MCF 10A (cell line): ENCODE measurements at regions of chr6 and their contacts with region 1.

Region 1: DNA sequence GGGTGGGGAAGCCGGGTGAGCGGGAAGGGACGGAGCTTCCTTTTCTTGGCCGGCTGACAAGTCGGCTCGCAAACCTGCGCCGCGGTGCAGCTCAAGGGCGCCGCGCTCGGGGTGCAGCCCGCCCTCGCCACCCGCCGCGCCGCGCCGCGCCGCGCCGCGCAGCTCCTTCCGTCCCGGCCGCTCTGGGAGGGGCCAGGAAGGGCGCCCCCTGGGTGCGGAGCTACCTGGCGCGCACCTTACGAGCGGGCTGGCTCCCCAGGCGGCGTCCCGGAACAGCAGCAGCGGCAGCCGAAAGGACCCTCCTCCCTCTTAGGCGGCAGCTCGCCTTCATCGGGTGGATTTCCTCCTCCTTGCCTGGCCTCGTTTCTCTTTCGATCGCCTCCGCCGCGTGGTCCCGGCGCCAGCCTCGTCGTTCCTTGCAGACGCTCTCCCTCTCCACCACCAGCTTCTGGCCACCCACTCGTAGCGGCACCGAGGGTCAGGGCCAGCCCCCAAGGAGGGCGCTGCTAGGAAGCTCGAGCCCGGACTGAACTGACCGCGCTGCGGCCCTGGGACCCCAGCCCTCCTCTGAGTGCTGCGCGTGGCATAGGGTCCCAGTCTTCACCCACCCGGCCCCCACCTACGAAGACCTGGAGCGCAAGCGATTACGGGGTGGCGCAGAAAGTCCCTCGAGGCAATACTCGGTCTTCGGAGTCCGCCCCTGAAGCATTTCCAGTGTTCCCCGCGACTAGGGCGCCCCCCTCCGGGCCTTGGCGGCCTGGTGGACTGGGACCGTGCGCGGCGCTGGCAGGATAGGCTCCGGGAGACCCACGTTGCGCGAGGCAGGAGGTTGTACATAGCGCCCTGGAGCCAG is at the start of gene MAP3K5:
- DNase-seq: peak; percentile 93
- H3K4me3 Mint-ChIP-seq: peak within 1 kb of the TSS; percentile 92
- H3K27ac Mint-ChIP-seq: peak within 1 kb of the TSS; percentile 98
- H3K4me1 Mint-ChIP-seq: peaks cover 17% of the 10 kb centered on the region
- H3K27me3 Mint-ChIP-seq: no peaks in the 10 kb centered on the region
- CTCF ChIP-seq: peak; percentile 65
- total RNA-seq, gene MAP3K5: 7.6 and 8.4 TPM in 2 replicates

Region 2: GRCh38 chr6:136383268-136383937 is 409.2 kb before region 1 on chr6:
- CTCF ChIA-PET with region 1: no interaction called
- POLR2A ChIA-PET with region 1: no interaction called
- intact Hi-C with region 1: no loop called
- DNase-seq: no peak
- H3K4me3 Mint-ChIP-seq: no peak overlapping the region
- H3K27ac Mint-ChIP-seq: no peak overlapping the region
- H3K4me1 Mint-ChIP-seq: no peaks in the 10 kb centered on the region
- H3K27me3 Mint-ChIP-seq: no peaks in the 10 kb centered on the region
- CTCF ChIP-seq: no peak

Region 3: GRCh38 chr6:136550330-136551071 is 242.1 kb before region 1 on chr6 and contains the start of gene MAP7:
- CTCF ChIA-PET with region 1: interaction called, 3 read pairs
- POLR2A ChIA-PET with region 1: interaction called, 9 read pairs
- intact Hi-C with region 1: loop called (anchors 1 kb)
- DNase-seq: peak; percentile 86
- H3K4me3 Mint-ChIP-seq: peak within 1 kb of the TSS; percentile 72
- H3K27ac Mint-ChIP-seq: peak within 1 kb of the TSS; percentile 57
- H3K4me1 Mint-ChIP-seq: peaks cover 8% of the 10 kb centered on the region
- H3K27me3 Mint-ChIP-seq: no peaks in the 10 kb centered on the region
- CTCF ChIP-seq: peak; percentile 97
- total RNA-seq, gene MAP7: 15.4 and 17.2 TPM in 2 replicates

Region 4: GRCh38 chr6:136613477-136613876 is 179.2 kb before region 1 on chr6:
- CTCF ChIA-PET with region 1: interaction called, 7 read pairs
- POLR2A ChIA-PET with region 1: interaction called, 11 read pairs
- intact Hi-C with region 1: loop called (anchors 1 kb)
- DNase-seq: no peak
- H3K4me3 Mint-ChIP-seq: no peak overlapping the region
- H3K27ac Mint-ChIP-seq: no peak overlapping the region
- H3K4me1 Mint-ChIP-seq: peaks cover 21% of the 10 kb centered on the region
- H3K27me3 Mint-ChIP-seq: no peaks in the 10 kb centered on the region
- CTCF ChIP-seq: no peak

Region 5: DNA sequence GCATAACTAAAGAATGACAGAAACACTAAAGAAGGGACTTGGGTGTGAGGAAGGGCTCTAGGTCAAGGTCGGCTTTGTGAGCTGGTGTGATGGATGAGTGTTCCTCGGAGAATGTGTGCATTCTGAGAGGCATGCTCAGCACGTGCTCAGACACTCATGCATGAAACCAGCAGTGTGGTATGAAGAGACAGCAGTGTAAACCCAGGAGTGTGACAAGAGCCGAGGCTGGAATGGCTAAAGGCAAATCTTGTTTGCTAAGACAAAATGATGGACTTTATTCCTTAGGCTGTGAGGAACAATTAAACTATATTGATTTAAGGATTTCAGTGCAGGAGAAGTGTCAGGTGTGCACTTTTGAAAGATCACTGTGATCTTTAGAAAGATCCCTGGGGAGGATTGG is 135.0 kb before region 1 on chr6:
- CTCF ChIA-PET with region 1: interaction called, 14 read pairs
- POLR2A ChIA-PET with region 1: interaction called, 16 read pairs
- intact Hi-C with region 1: no loop called
- DNase-seq: no peak
- H3K4me3 Mint-ChIP-seq: no peak overlapping the region
- H3K27ac Mint-ChIP-seq: no peak overlapping the region
- H3K4me1 Mint-ChIP-seq: peaks cover 12% of the 10 kb centered on the region
- H3K27me3 Mint-ChIP-seq: no peaks in the 10 kb centered on the region
- CTCF ChIP-seq: no peak

Region 6: GRCh38 chr6:136696238-136696637 is 96.4 kb before region 1 on chr6:
- CTCF ChIA-PET with region 1: interaction called, 13 read pairs
- POLR2A ChIA-PET with region 1: interaction called, 134 read pairs
- intact Hi-C with region 1: loop called (anchors 1 kb)
- DNase-seq: peak; percentile 62
- H3K4me3 Mint-ChIP-seq: peak overlapping the region; percentile 60
- H3K27ac Mint-ChIP-seq: peak overlapping the region; percentile 86
- H3K4me1 Mint-ChIP-seq: peaks cover 38% of the 10 kb centered on the region
- H3K27me3 Mint-ChIP-seq: no peaks in the 10 kb centered on the region
- CTCF ChIP-seq: no peak

Region 7: GRCh38 chr6:136822376-136823127 is 29.9 kb after region 1 on chr6 and contains the start of gene PEX7:
- CTCF ChIA-PET with region 1: interaction called, 7 read pairs
- POLR2A ChIA-PET with region 1: interaction called, 10 read pairs
- intact Hi-C with region 1: no loop called
- DNase-seq: peak; percentile 93
- H3K4me3 Mint-ChIP-seq: peak within 1 kb of the TSS; percentile 81
- H3K27ac Mint-ChIP-seq: peak within 1 kb of the TSS; percentile 86
- H3K4me1 Mint-ChIP-seq: no peaks in the 10 kb centered on the region
- H3K27me3 Mint-ChIP-seq: no peaks in the 10 kb centered on the region
- CTCF ChIP-seq: peak; percentile 36
- total RNA-seq, gene PEX7: 6.0 and 8.2 TPM in 2 replicates

Region 8: GRCh38 chr6:136926383-136926782 is 133.7 kb after region 1 on chr6:
- CTCF ChIA-PET with region 1: no interaction called
- POLR2A ChIA-PET with region 1: no interaction called
- intact Hi-C with region 1: no loop called
- DNase-seq: no peak
- H3K4me3 Mint-ChIP-seq: no peak overlapping the region
- H3K27ac Mint-ChIP-seq: no peak overlapping the region
- H3K4me1 Mint-ChIP-seq: no peaks in the 10 kb centered on the region
- H3K27me3 Mint-ChIP-seq: peaks cover 11% of the 10 kb centered on the region
- CTCF ChIP-seq: no peak